PC-3 (cell line): ENCODE measurements at regions of chr10 and their contacts with region 1.

Region 1: DNA sequence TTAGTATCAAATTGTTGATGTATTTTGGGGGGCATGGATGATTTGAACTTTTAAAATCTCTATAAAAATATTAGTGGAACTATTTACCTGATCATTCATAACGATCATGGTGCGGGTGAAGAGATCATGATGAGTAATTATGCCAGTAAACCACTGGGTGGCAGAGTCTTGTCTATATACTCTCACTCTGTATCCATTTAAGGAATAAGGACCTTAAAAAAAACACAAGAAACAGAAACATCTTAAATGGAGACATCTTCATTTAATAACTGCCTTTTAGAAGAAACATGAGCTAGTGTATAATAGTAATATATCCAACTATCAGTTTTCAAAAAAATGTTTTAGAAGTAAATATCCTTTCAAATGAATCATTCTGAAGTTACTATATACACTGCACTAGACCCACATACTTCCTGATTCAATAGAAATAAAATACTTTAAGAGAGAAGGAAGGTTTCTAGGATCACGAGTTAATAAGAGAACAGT is 84.0 kb downstream of the NRBF2 start:
- DNase-seq: peak; percentile 92
- ATAC-seq: peak; percentile 85
- H3K4me3 ChIP-seq: no peak overlapping the region
- H3K27ac ChIP-seq: no peak overlapping the region; the same call in 1 of the 2 replicates
- H3K4me1 ChIP-seq: peaks cover 5% of the 10 kb centered on the region
- H3K27me3 ChIP-seq: no peaks in the 10 kb centered on the region
- CTCF ChIP-seq: peak; percentile 100

Region 2: GRCh38 chr10:63521416-63522276 is 304.5 kb after region 1 on chr10:
- CTCF ChIA-PET with region 1: no interaction called
- POLR2A ChIA-PET with region 1: no interaction called
- intact Hi-C with region 1: loop called (anchors 2 kb)
- DNase-seq: peak; percentile 94
- ATAC-seq: peak; percentile 58
- H3K4me3 ChIP-seq: peak overlapping the region; percentile 75
- H3K27ac ChIP-seq: peak overlapping the region; percentile 85
- H3K4me1 ChIP-seq: peaks cover 65% of the 10 kb centered on the region
- H3K27me3 ChIP-seq: no peaks in the 10 kb centered on the region
- CTCF ChIP-seq: no peak

Region 3: GRCh38 chr10:63588436-63589167 is 371.4 kb after region 1 on chr10:
- CTCF ChIA-PET with region 1: interaction called, 5 read pairs
- POLR2A ChIA-PET with region 1: no interaction called
- intact Hi-C with region 1: loop called (anchors 5 kb)
- DNase-seq: peak; percentile 93
- ATAC-seq: peak; percentile 79
- H3K4me3 ChIP-seq: peak overlapping the region; percentile 2; the same call in 1 of the 2 replicates
- H3K27ac ChIP-seq: peak overlapping the region; percentile 44
- H3K4me1 ChIP-seq: peaks cover 31% of the 10 kb centered on the region
- H3K27me3 ChIP-seq: no peaks in the 10 kb centered on the region
- CTCF ChIP-seq: no peak

Region 4: DNA sequence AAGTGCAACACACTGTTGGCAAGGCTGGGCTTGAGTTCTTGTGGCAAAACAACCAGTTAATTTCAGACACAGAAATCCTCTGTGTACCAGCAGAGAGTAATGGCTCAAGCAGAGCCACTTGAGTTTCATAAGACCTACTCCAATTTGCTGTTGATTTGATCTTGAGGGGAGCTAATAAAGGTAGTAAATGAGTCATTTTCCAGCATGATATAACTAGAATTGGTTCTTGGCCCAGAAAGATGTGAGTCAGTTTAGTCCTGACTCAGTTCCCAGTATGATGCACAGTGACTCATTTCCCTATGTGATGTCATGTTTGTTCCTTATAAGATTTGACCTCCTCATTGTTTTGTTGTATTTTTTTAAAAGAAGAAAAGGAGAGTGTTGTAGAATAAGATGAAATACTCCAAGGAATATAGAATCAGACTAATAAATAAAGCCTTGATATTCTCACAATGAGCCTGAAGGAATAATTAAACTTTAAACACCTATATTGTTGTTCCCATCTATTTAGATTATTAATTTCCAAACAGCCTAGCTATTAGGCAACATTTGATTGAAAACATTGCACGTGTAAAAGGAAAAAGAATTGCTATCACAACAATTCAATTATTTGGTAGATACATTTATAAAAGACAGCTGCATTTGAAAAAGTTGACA is 490.2 kb after region 1 on chr10:
- CTCF ChIA-PET with region 1: interaction called, 3 read pairs
- POLR2A ChIA-PET with region 1: no interaction called
- intact Hi-C with region 1: loop called (anchors 2 kb)
- DNase-seq: peak; percentile 100
- ATAC-seq: peak; percentile 70
- H3K4me3 ChIP-seq: no peak overlapping the region
- H3K27ac ChIP-seq: peak overlapping the region; percentile 76
- H3K4me1 ChIP-seq: peaks cover 62% of the 10 kb centered on the region
- H3K27me3 ChIP-seq: no peaks in the 10 kb centered on the region
- CTCF ChIP-seq: no peak

Region 5: DNA sequence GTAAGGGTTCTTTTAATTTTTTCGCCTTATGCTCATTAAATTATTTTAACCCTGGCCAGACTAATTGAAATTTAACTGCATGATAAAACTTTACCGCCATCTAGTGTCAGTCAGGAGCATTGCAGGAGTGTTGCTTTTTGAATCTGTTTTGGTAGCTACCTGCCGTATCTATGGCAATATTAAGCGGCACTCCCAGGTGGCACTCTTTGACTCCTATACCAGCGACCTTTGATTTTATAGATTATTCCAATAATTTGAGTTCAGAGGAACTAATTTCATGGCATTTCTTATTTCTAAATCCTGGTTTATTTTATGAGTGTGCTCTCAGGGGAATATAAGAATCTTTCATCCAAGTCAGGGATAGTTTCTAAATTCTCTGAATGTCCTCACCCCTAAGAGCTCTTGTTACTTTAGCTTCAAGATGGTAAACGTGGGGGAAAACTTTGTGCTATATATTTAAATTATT is 502.9 kb after region 1 on chr10:
- CTCF ChIA-PET with region 1: interaction called, 5 read pairs
- POLR2A ChIA-PET with region 1: no interaction called
- intact Hi-C with region 1: loop called (anchors 1 kb)
- DNase-seq: peak; percentile 97
- ATAC-seq: peak; percentile 53
- H3K4me3 ChIP-seq: no peak overlapping the region
- H3K27ac ChIP-seq: no peak overlapping the region
- H3K4me1 ChIP-seq: peaks cover 29% of the 10 kb centered on the region
- H3K27me3 ChIP-seq: no peaks in the 10 kb centered on the region
- CTCF ChIP-seq: peak; percentile 100

Region 6: GRCh38 chr10:63767138-63767801 is 550.1 kb after region 1 on chr10:
- CTCF ChIA-PET with region 1: no interaction called
- POLR2A ChIA-PET with region 1: no interaction called
- intact Hi-C with region 1: loop called (anchors 1 kb)
- DNase-seq: peak; percentile 71
- ATAC-seq: peak; percentile 44
- H3K4me3 ChIP-seq: no peak overlapping the region
- H3K27ac ChIP-seq: no peak overlapping the region
- H3K4me1 ChIP-seq: no peaks in the 10 kb centered on the region
- H3K27me3 ChIP-seq: no peaks in the 10 kb centered on the region
- CTCF ChIP-seq: peak; percentile 83